ENCODE measurements at regions of chr10 and their contacts with region 1.

Region 1: GRCh38 chr10:131885391-131886161 is 15.2 kb upstream of the PPP2R2D start:
- DNase-seq: peak; percentile 74 to 92 (median 82)
- ATAC-seq: peak; percentile 100
- H3K4me3 ChIP-seq: no peak overlapping the region
- H3K4me3 Mint-ChIP-seq: no peak overlapping the region
- H3K27ac ChIP-seq: no peak overlapping the region
- H3K27ac Mint-ChIP-seq: no peak overlapping the region
- H3K4me1 ChIP-seq: peaks cover 6% of the 10 kb centered on the region
- H3K4me1 Mint-ChIP-seq: peaks cover 4% of the 10 kb centered on the region
- H3K27me3 ChIP-seq: peaks cover 0 to 4% of the 10 kb centered on the region in 2 experiments
- H3K27me3 Mint-ChIP-seq: peaks cover 18% of the 10 kb centered on the region
- CTCF ChIP-seq: peak; percentile 91

Region 2: DNA sequence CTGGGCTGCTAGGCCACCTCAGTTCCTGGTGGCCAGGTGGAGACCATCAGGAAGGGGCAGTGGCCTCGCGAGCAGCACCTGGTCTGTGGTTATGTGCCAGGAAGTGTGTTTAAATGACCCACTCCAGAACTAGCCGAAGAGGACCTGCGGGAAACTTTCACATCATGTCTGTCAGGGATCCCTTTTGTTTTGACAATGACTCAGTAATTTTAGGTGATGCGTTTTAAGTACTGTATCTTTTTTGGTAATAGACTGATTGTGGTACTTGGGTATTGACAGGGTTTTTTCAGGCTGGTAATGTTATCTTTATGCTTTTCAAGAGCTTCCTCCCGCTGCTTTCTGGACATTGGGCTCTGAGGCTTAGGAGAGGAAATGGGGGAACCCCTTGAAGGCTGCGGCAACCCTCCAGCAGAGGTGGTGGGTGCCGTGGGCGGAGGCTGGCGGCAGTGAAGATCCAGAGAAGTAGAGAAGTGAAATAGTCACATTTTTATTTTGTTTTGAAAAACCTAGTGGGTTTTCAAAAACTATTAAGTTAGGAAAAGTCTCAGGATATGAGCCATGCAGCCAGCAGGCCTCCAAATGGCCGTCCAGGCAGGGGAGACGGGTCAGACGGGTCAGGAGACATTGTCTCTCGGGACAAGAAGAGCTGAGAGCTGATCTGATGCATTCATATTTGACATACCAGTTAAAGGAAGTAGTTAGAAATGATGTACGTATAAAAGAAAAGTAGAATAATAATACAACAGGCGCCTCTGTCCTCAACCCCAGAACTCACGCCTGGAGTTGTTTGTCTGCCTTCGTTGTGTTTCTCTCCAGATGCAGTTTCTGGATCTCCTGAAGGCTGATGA is 42.9 kb after region 1 on chr10:
- CTCF ChIA-PET with region 1: interaction called, 13 read pairs
- POLR2A ChIA-PET with region 1: no interaction called
- intact Hi-C with region 1: loop called in 1 of 2 experiments (anchors 5 kb)
- DNase-seq: peak in 7 of 9 experiments; percentile 21 to 65 (median 45)
- ATAC-seq: peak; percentile 73
- H3K4me3 ChIP-seq: peak overlapping the region in 1 of 2 experiments; percentile 9
- H3K4me3 Mint-ChIP-seq: peak overlapping the region; percentile 71
- H3K27ac ChIP-seq: peak overlapping the region in 1 of 2 experiments; percentile 12
- H3K27ac Mint-ChIP-seq: peak overlapping the region; percentile 84
- H3K4me1 ChIP-seq: peaks cover 36% of the 10 kb centered on the region
- H3K4me1 Mint-ChIP-seq: peaks cover 80% of the 10 kb centered on the region
- H3K27me3 ChIP-seq: no peaks in the 10 kb centered on the region
- H3K27me3 Mint-ChIP-seq: no peaks in the 10 kb centered on the region
- CTCF ChIP-seq: no peak

Region 3: DNA sequence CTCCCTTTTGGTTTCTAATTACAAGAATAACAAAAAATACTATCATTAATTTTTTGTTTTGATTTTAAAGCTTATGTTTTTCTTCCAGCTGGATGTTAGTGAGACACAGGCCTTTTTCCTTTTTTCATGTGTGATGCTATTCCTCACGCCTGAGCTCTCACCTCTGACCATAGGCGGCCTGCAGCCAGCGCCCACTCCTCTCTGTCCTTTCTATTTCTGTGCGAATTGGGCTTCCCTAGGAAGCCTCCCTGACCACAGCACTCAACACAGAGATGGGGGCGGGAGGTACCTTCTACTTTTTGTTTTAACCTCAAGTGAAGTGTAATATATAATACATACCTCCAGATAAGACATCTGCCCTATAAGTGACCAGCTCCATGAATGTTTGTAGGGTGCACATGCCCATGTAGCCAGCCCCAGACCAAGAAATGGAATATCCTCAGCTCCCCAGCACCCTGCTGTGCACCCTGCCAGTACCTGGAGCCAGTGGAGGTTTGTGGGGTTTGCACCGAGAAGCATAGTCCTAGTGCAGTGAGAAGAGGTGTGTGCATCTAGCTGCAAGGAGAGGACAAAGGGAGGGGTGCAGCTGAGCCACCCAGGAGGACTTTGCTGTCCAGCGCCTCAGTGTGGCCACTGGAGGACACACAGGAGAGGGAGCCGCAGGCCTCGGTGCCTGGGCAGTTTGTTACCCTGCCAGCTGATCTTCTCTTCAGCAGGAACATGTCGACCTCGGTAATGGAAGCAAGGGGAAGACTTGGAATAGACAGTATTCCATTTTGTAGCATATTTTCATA is 57.6 kb after region 1 on chr10:
- CTCF ChIA-PET with region 1: interaction called, 20 read pairs
- POLR2A ChIA-PET with region 1: no interaction called
- intact Hi-C with region 1: loop called (anchors 1 to 5 kb)
- DNase-seq: peak in 4 of 9 experiments; percentile 25 to 43 (median 36)
- ATAC-seq: peak; percentile 59
- H3K4me3 ChIP-seq: no peak overlapping the region
- H3K4me3 Mint-ChIP-seq: no peak overlapping the region
- H3K27ac ChIP-seq: no peak overlapping the region
- H3K27ac Mint-ChIP-seq: peak overlapping the region; percentile 62
- H3K4me1 ChIP-seq: no peaks in the 10 kb centered on the region
- H3K4me1 Mint-ChIP-seq: peaks cover 3% of the 10 kb centered on the region
- H3K27me3 ChIP-seq: no peaks in the 10 kb centered on the region
- H3K27me3 Mint-ChIP-seq: no peaks in the 10 kb centered on the region
- CTCF ChIP-seq: peak; percentile 23

Region 4: GRCh38 chr10:131961777-131962662 is 76.4 kb after region 1 on chr10:
- CTCF ChIA-PET with region 1: interaction called, 13 read pairs
- POLR2A ChIA-PET with region 1: no interaction called
- intact Hi-C with region 1: no loop called
- DNase-seq: no peak
- ATAC-seq: no peak
- H3K4me3 ChIP-seq: no peak overlapping the region
- H3K4me3 Mint-ChIP-seq: no peak overlapping the region
- H3K27ac ChIP-seq: no peak overlapping the region
- H3K27ac Mint-ChIP-seq: no peak overlapping the region
- H3K4me1 ChIP-seq: peaks cover 18% of the 10 kb centered on the region
- H3K4me1 Mint-ChIP-seq: peaks cover 23% of the 10 kb centered on the region
- H3K27me3 ChIP-seq: no peaks in the 10 kb centered on the region
- H3K27me3 Mint-ChIP-seq: no peaks in the 10 kb centered on the region
- CTCF ChIP-seq: no peak

Region 5: GRCh38 chr10:131972474-131973071 is 87.0 kb after region 1 on chr10:
- CTCF ChIA-PET with region 1: interaction called, 11 read pairs
- POLR2A ChIA-PET with region 1: interaction called, 3 read pairs
- intact Hi-C with region 1: no loop called
- DNase-seq: peak in 6 of 9 experiments; percentile 15 to 72 (median 50)
- ATAC-seq: peak; percentile 62
- H3K4me3 ChIP-seq: peak overlapping the region; percentile 38 to 52
- H3K4me3 Mint-ChIP-seq: peak overlapping the region; percentile 79
- H3K27ac ChIP-seq: peak overlapping the region; percentile 34 to 68
- H3K27ac Mint-ChIP-seq: peak overlapping the region; percentile 94
- H3K4me1 ChIP-seq: peaks cover 67% of the 10 kb centered on the region
- H3K4me1 Mint-ChIP-seq: peaks cover 69% of the 10 kb centered on the region
- H3K27me3 ChIP-seq: no peaks in the 10 kb centered on the region
- H3K27me3 Mint-ChIP-seq: no peaks in the 10 kb centered on the region
- CTCF ChIP-seq: no peak

Region 6: DNA sequence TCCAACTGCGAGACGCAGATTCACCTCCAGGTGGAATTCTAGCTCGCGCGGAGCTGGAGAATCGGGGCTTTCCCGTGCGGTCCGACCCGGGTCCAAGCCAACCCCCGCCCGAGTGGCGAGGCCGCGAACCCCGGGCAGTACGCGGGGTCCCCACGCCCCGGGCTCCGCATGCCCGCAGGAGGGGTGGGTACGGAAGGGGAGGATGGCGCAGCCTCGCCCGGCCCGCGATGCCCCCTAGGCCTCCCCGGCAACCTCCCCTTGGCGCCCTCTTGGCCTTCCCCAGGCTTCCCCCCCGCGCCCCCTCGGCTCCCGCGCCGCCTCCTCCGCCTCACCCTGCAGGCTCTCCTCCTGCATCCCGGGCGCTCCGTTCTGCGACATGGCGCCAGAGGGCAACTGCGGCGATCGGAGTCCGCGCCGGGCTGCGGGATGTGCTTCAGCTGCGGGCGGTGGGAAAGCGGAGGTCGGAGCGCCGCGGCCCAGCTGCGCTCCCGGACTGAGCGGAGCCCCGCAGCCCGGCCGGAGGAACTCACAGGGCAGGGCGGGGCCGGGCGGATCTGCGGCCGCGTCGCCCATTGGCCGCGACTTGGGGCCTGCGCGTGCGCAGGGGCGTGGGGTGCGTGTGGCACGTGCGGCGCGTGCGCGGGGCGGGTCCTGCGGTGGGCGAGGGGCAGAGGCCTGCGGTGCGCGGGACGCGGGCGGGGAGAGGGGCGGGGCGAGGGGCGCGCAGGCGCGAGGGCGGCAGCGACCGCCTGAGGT is 96.0 kb after region 1 on chr10 and contains the start of gene BNIP3:
- CTCF ChIA-PET with region 1: interaction called, 9 read pairs
- POLR2A ChIA-PET with region 1: no interaction called
- intact Hi-C with region 1: loop called in 1 of 2 experiments (anchors 1 kb)
- DNase-seq: peak; percentile 84 to 98 (median 94)
- ATAC-seq: peak; percentile 90
- H3K4me3 ChIP-seq: peak within 1 kb of the TSS; percentile 66 to 83
- H3K4me3 Mint-ChIP-seq: peak within 1 kb of the TSS; percentile 84
- H3K27ac ChIP-seq: peak within 1 kb of the TSS; percentile 43 to 48
- H3K27ac Mint-ChIP-seq: peak within 1 kb of the TSS; percentile 81
- H3K4me1 ChIP-seq: peaks cover 47% of the 10 kb centered on the region
- H3K4me1 Mint-ChIP-seq: peaks cover 40% of the 10 kb centered on the region
- H3K27me3 ChIP-seq: no peaks in the 10 kb centered on the region
- H3K27me3 Mint-ChIP-seq: no peaks in the 10 kb centered on the region
- CTCF ChIP-seq: no peak
- total RNA-seq, gene BNIP3: 19.2 to 21.3 TPM

Region 7: GRCh38 chr10:132023092-132023811 is 137.7 kb after region 1 on chr10:
- CTCF ChIA-PET with region 1: interaction called, 173 read pairs
- POLR2A ChIA-PET with region 1: interaction called, 5 read pairs
- intact Hi-C with region 1: loop called in 1 of 2 experiments (anchors 1 kb)
- DNase-seq: peak; percentile 54 to 88 (median 77)
- ATAC-seq: peak; percentile 94
- H3K4me3 ChIP-seq: no peak overlapping the region
- H3K4me3 Mint-ChIP-seq: peak overlapping the region; percentile 8
- H3K27ac ChIP-seq: no peak overlapping the region
- H3K27ac Mint-ChIP-seq: no peak overlapping the region
- H3K4me1 ChIP-seq: peaks cover 6% of the 10 kb centered on the region
- H3K4me1 Mint-ChIP-seq: peaks cover 7% of the 10 kb centered on the region
- H3K27me3 ChIP-seq: peaks cover 0 to 6% of the 10 kb centered on the region in 2 experiments
- H3K27me3 Mint-ChIP-seq: peaks cover 30% of the 10 kb centered on the region
- CTCF ChIP-seq: peak; percentile 91